Ascending aorta (tissue), 2 donors: ENCODE measurements at regions of chr1 and their contacts with region 1.

Region 1: DNA sequence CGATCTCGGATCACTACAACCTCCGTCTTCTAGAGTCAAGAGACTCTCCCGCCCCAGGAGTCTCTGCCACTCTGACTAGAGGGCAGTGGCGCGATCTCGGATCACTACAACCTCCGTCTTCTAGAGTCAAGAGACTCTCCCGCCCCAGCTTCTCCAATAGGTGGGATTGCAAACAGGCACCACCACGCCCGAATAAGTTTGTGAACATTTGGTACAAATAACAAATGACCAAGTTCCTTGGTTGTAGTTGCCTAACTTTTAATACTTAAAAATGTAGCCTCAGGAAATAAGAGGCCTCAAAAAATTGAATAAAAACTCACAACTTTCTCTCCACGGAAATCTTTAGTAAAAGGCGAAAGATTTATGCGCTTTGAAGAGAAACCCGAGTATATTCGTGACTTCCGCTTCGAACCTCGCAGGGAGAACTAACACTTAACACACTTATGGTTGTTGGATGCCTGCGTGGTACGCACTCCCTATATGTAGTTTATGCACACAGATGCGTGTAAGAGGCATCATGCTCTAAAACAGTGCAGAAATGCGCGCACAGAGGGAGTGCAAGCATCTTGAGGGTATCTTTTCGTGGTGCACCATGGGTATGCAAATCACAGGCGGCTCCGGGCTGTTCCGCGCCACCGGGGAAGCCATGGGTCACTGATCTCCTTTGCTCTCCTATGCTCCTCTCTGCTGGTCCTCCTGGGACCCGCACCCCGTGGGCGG is 11.4 kb downstream of the BTBD19 start:
- DNase-seq: peak in 1 of 2 donors; percentile 95
- H3K4me3 ChIP-seq: peak overlapping the region; percentile 66
- H3K27ac ChIP-seq: peak overlapping the region; percentile 77 to 95
- H3K4me1 ChIP-seq: peaks cover 0 to 20% of the 10 kb centered on the region in 2 donors
- H3K27me3 ChIP-seq: no peaks in the 10 kb centered on the region
- CTCF ChIP-seq: peak in 1 of 3 experiments; percentile 16

Region 2: GRCh38 chr1:44807262-44808062 is 12.3 kb before region 1 on chr1 and contains the start of gene DYNLT4:
- intact Hi-C with region 1: loop called (anchors 1 kb)
- DNase-seq: peak; percentile 99 to 100
- H3K4me3 ChIP-seq: peak within 1 kb of the TSS; percentile 38 to 45
- H3K27ac ChIP-seq: peak within 1 kb of the TSS; percentile 99
- H3K4me1 ChIP-seq: peaks cover 57 to 82% of the 10 kb centered on the region in 2 donors
- H3K27me3 ChIP-seq: no peaks in the 10 kb centered on the region
- CTCF ChIP-seq: no peak
- total RNA-seq, gene DYNLT4: not detected